KBM-7 (cell line): ENCODE measurements at regions of chr15 and their contacts with region 1.

Region 1: GRCh38 chr15:63600616-63601025 is 3.4 kb downstream of the FBXL22 start:
- DNase-seq: peak; percentile 97

Region 2: DNA sequence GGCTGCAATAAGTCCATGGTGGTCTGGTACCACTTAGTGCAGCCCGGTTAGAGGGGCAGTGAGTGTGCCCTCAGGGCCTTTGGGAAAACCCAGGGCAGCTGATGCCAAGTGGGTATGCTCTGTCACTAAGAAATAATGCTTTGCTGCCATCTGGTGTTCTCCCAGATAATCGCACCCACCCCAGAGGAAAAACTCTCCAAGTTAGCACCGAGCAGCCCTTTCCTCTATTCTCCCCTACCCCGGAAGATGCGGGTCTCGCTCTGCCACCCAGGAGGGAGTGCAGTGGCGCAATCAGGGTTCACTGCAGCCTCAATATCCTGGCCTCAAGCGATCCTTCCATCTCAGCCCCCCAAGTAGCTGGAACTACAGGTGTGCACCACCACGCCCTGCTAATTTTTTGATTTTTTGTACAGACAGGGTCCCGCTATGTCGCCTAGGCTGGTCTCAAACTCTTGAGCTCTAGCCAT is 467.0 kb after region 1 on chr15:
- in situ Hi-C with region 1: loop called (anchors 25 kb)
- DNase-seq: peak; percentile 93